ENCODE measurements at regions of chr7 and their contacts with region 1.

Region 1: DNA sequence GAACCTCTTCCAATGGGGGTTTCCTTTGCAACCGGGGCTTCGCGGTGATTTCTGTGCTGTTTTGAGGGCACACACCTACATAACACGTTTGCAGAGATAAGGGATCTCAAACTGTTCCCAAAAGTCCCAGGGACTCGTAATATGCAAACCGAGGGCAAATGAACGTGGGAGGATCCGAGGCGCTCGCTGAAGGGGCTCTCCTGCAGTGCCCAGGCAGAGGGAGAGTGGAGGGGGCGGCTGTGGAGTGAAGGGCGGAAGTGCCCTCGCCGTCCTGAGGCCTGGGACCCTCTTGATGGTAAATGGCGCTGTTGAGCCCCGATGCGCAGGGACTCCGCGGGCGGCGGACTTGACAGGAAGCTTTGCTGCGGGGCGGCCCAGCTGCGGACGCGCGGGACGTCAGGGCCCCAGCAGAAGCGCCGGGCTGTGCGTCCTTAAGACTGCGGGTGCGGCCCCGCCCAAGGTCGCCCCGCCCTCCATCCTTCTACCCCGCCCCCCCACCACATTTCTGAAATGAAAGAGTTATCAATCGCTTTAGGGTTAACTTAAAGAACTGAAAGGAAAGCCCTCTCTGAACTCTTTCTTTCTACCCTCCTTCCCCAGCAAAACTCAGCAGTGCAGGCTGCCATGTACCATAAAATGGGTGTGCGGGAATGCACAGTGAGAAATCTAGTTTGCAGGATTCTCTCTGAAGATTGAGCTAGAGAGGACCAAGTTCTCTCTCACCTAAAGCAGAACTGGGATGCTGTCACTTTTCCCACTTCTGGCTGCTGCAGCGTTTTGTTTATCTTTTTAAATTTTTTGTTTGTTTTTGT is 151.8 kb upstream of the YAE1 start:
- DNase-seq: peak; percentile 20
- ATAC-seq: peak; percentile 97
- H3K4me3 ChIP-seq: peak overlapping the region; percentile 66
- H3K27ac ChIP-seq: no peak overlapping the region
- H3K4me1 ChIP-seq: no peaks in the 10 kb centered on the region
- H3K27me3 ChIP-seq: no peaks in the 10 kb centered on the region
- CTCF ChIP-seq: no peak; a peak in 1 of 6 replicates
- EP300 ChIP-seq: peak; percentile 4 to 13; a peak in 1 of 4 replicates
- POLR2A ChIP-seq: no peak
- RAD21 ChIP-seq: no peak

Region 2: DNA sequence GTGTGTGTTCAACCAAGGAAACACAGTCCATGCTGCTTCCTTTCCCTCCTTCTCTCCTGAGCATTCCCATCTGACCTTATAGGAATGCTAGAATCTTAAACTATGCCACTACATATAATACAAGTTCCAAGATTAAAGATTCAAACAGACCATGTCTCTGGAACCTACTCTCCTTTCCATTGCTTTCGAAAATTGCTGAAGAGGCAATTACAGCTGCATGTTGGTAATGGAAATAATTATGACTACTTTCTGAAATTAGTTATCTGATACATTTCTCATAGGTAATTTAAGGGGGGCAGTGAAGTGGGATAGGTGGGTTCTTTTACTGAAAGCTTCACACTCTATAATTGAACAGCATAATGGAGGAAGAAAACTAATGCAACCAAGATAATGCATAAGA is 134.1 kb before region 1 on chr7:
- CTCF ChIA-PET with region 1: no interaction called
- POLR2A ChIA-PET with region 1: no interaction called
- RAD21 ChIA-PET with region 1: no interaction called
- SMC1A ChIA-PET with region 1: no interaction called
- in situ Hi-C with region 1: no loop called
- intact Hi-C with region 1: no loop called
- DNase-seq: no peak
- ATAC-seq: no peak
- H3K4me3 ChIP-seq: no peak overlapping the region
- H3K27ac ChIP-seq: no peak overlapping the region
- H3K4me1 ChIP-seq: no peaks in the 10 kb centered on the region
- H3K27me3 ChIP-seq: no peaks in the 10 kb centered on the region
- CTCF ChIP-seq: no peak
- EP300 ChIP-seq: no peak
- POLR2A ChIP-seq: no peak
- RAD21 ChIP-seq: no peak

Region 3: GRCh38 chr7:39321909-39322498 is 92.4 kb before region 1 on chr7:
- CTCF ChIA-PET with region 1: interaction called, 4 read pairs
- POLR2A ChIA-PET with region 1: no interaction called
- RAD21 ChIA-PET with region 1: no interaction called
- SMC1A ChIA-PET with region 1: no interaction called
- in situ Hi-C with region 1: no loop called
- intact Hi-C with region 1: loop called (anchors 5 kb)
- DNase-seq: no peak
- ATAC-seq: peak; percentile 87
- H3K4me3 ChIP-seq: no peak overlapping the region
- H3K27ac ChIP-seq: no peak overlapping the region
- H3K4me1 ChIP-seq: no peaks in the 10 kb centered on the region
- H3K27me3 ChIP-seq: no peaks in the 10 kb centered on the region
- CTCF ChIP-seq: no peak
- EP300 ChIP-seq: no peak
- POLR2A ChIP-seq: no peak
- RAD21 ChIP-seq: no peak

Region 4: GRCh38 chr7:39433550-39433949 is 19.1 kb after region 1 on chr7:
- CTCF ChIA-PET with region 1: no interaction called
- POLR2A ChIA-PET with region 1: no interaction called
- RAD21 ChIA-PET with region 1: no interaction called
- SMC1A ChIA-PET with region 1: interaction called, 10 read pairs
- in situ Hi-C with region 1: no loop called
- intact Hi-C with region 1: no loop called
- DNase-seq: peak; percentile 16
- ATAC-seq: peak; percentile 64
- H3K4me3 ChIP-seq: no peak overlapping the region
- H3K27ac ChIP-seq: no peak overlapping the region
- H3K4me1 ChIP-seq: no peaks in the 10 kb centered on the region
- H3K27me3 ChIP-seq: no peaks in the 10 kb centered on the region
- CTCF ChIP-seq: no peak
- EP300 ChIP-seq: no peak
- POLR2A ChIP-seq: no peak
- RAD21 ChIP-seq: no peak

Region 5: GRCh38 chr7:39453743-39454355 is 39.4 kb after region 1 on chr7:
- CTCF ChIA-PET with region 1: interaction called, 29 read pairs
- POLR2A ChIA-PET with region 1: no interaction called
- RAD21 ChIA-PET with region 1: no interaction called
- SMC1A ChIA-PET with region 1: interaction called, 3 read pairs
- in situ Hi-C with region 1: no loop called
- intact Hi-C with region 1: no loop called
- DNase-seq: peak; percentile 23
- ATAC-seq: peak; percentile 95
- H3K4me3 ChIP-seq: no peak overlapping the region
- H3K27ac ChIP-seq: no peak overlapping the region
- H3K4me1 ChIP-seq: no peaks in the 10 kb centered on the region
- H3K27me3 ChIP-seq: peaks cover 0 to 6% of the 10 kb centered on the region in 2 experiments; a peak in 1 of 4 replicates
- CTCF ChIP-seq: peak; percentile 68 to 96 (median 93)
- EP300 ChIP-seq: no peak
- POLR2A ChIP-seq: no peak
- RAD21 ChIP-seq: peak; percentile 57

Measured in GM12878 (cell line).